A549 (cell line): ENCODE measurements at regions of chr1 and their contacts with region 1.

Region 1: GRCh38 chr1:32321712-32322291 is 14.2 kb downstream of the MARCKSL1 start:
- DNase-seq: peak; percentile 42 to 88
- ATAC-seq: peak; percentile 97 to 98
- H3K4me3 ChIP-seq: 0 out of 3 replicates have a peak overlapping the region, but pooled peaks have one; percentile 9
- H3K27ac ChIP-seq: peak overlapping the region; percentile 87 to 90
- H3K4me1 ChIP-seq: peaks cover 31% of the 10 kb centered on the region
- CTCF ChIP-seq: no peak
- EP300 ChIP-seq: no peak; a peak in 1 of 5 replicates
- POLR2A ChIP-seq: no peak
- RAD21 ChIP-seq: no peak

Region 2: DNA sequence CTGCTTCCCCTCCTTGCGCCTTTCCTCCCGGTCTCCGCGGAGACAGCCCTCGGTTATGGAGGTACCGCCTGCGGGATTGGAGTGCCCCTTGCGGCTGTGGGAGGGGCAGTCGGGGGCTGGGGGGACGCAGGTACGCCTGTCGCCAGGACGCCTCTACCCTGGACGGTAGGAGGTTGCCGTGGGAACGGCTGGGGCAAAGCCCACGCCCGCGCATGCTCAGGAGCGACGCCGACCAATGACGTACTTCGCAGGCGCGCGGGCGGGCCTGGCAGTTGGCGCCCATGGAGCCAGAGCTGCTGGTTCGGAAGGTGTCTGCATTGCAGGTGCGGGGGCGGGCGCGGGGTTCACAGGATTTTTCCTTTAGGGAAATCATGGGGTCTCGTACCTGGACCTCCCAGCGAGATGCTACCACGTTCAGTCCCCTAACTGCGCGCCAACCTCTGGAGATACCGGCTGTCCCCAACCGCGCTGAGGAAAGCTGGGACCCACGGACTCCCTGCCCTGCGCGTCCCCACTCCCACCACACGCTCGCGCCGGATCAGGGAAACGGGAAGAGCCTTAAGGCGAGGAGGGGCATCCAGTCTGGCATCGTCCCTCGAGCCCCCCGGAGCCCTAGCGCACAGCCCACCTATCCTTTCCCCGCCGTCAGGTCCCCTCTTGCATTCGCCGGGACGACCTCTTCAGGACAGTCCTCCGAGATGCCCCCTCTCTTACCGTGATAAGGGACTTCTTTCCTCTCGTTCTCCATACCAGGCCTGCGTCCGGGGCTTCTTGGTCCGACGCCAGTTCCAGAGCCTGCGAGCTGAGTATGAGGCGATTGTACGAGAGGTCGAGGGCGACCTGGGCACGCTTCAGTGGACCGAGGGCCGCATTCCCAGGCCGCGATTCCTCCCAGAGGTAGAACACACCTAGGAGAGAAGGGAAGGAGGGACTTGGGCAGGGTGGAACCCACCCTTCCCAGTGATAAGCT is 116.1 kb before region 1 on chr1 and contains the start of gene IQCC:
- CTCF ChIA-PET with region 1: interaction called, 11 read pairs
- POLR2A ChIA-PET with region 1: interaction called, 4 read pairs
- DNase-seq: peak; percentile 70 to 81
- ATAC-seq: peak; percentile 75 to 84
- H3K4me3 ChIP-seq: peak within 1 kb of the TSS; percentile 83
- H3K27ac ChIP-seq: peak within 1 kb of the TSS; percentile 85 to 92
- H3K4me1 ChIP-seq: peaks cover 12% of the 10 kb centered on the region; the same call in 2 of the 3 replicates
- CTCF ChIP-seq: no peak
- EP300 ChIP-seq: no peak
- POLR2A ChIP-seq: peak; percentile 57
- RAD21 ChIP-seq: no peak
- polyA plus RNA-seq, gene IQCC: 1.6 and 1.8 TPM in 2 replicates

Region 3: DNA sequence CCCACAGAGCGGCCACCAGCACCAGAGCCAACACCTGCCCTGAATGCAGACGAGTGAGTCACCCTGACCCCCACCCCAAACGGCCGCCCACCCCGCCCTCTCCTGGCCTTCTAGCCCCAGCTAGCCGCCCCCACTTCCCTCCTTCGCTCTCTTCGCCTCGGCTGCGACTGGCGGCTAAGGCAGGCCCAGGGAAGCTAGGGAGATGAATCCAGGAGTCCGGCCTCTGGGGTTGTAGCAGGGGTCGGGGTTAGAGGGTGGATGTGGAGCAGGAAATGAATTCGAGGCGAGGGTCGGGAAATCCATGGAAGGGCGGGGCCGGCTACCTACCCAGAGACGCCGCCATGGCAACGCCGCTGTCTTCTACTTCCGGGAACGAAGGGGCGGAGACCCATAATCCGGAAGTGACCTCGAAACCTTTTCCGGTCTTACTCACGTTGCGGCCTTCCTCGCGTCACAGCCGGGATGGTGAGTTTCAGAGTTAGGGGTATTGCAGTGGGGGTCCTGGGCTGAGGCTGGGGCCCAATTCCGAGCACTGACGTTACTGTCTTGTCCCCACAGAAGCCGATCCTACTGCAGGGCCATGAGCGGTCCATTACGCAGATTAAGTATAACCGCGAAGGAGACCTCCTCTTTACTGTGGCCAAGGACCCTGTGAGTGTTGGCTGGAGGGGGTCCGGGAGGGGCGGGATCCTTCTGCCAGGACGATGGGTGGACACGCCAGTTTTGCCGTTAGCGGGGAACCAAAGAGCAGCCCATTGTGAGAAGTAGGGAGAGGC is 99.6 kb before region 1 on chr1 and contains the starts of genes EIF3I and TMEM234:
- CTCF ChIA-PET with region 1: interaction called, 30 read pairs
- POLR2A ChIA-PET with region 1: no interaction called
- DNase-seq: peak; percentile 84 to 89
- ATAC-seq: peak; percentile 97
- H3K4me3 ChIP-seq: peak within 1 kb of the TSS; percentile 86
- H3K27ac ChIP-seq: peak within 1 kb of the TSS; percentile 93 to 97
- H3K4me1 ChIP-seq: peaks cover 18% of the 10 kb centered on the region
- CTCF ChIP-seq: no peak
- EP300 ChIP-seq: no peak
- POLR2A ChIP-seq: peak; percentile 53
- RAD21 ChIP-seq: no peak
- polyA plus RNA-seq, gene EIF3I: 299 and 300 TPM in 2 replicates
- polyA plus RNA-seq, gene TMEM234: 8.4 and 10.9 TPM in 2 replicates

Region 4: DNA sequence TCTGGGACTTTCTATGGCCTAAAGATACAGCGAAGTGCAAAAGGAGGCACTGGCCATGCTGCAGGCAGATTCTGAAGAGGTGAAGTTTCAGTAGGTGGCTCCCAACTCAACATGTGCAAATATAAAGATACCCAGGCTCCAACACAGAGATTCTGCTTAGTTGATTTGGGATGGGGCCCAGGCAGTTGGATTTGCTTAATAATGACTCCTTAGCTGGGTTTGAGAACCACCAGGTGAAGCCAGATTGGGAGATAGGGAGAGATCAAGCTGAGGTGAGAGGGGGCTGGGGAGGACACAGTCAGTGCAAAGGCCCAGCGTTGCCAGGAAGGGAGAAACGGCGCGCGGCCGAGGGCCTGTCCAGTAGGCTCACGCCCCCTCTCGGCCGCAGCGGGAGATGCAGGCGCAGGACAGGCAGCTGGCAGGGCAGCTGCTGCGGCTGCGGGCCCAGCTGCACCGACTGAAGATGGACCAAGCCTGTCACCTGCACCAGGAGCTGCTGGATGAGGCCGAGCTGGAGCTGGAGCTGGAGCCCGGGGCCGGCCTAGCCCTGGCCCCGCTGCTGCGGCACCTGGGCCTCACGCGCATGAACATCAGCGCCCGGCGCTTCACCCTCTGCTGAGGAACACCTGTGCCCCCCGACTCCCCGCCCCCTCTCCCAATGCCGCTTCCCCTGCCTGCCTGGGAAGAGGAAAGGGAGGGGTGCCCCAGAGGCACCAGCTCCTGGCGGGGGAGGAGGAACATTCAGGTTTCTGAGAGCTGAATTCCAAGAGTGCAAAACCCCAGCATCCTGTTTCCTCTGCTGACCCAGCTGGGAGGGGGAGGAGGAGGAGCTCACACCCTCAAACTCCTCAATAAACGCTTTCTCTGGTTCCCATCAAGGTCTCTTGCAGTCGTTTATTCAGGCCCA is 73.6 kb before region 1 on chr1:
- CTCF ChIA-PET with region 1: interaction called, 28 read pairs
- POLR2A ChIA-PET with region 1: no interaction called
- DNase-seq: peak; percentile 72 to 74
- ATAC-seq: peak; percentile 90 to 95
- H3K4me3 ChIP-seq: no peak overlapping the region
- H3K27ac ChIP-seq: peak overlapping the region in 1 of 2 experiments; percentile 57; a peak in 2 of 6 replicates
- H3K4me1 ChIP-seq: peaks cover 3% of the 10 kb centered on the region; the same call in 1 of the 3 replicates
- CTCF ChIP-seq: peak; percentile 66
- EP300 ChIP-seq: no peak
- POLR2A ChIP-seq: no peak
- RAD21 ChIP-seq: peak; percentile 47 to 56

Region 5: DNA sequence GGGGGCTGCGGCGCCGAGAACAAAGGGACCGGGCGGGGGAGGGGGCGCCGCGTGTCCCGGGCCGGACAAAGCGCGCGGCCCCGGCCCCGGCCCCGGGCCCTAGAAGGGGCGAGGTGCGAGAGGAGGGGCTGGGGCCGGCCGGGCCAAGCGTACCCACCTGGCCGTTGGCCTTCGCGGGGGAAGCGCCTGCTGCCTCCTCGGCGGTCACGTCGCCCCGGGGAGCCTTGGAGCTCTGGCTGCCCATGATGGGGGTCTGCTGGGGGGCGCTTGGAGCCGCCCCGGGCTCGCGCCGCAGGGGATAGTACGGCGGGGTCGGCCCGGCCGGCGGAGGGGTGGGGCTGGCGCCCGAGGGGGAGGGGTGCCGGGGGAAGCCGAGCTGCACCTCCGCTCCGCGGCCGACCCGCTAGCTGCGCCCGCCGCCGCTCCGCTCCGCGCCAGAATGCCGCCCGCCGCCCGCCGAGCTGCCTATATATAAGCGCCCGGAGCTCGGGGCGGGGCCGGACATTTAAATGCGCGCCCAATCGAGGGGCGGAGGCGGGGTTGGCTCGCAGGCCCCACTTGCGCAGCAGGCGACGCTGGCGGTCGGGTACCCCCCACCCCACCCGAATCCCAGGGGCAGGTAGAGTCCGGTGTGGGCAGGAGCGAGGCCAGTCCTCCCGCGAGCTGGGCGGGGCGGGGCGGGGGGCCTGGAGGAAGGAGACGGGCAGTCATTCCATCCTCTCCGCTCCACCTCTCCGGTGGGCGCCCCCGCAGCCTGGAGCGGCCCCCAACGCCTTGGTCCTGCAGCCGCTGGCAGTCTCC is 14.2 kb after region 1 on chr1 and contains the start of gene MARCKSL1:
- CTCF ChIA-PET with region 1: interaction called, 5 read pairs
- POLR2A ChIA-PET with region 1: interaction called, 20 read pairs
- DNase-seq: peak; percentile 43 to 54
- ATAC-seq: peak; percentile 62 to 73
- H3K4me3 ChIP-seq: peak within 1 kb of the TSS; percentile 100
- H3K27ac ChIP-seq: peak within 1 kb of the TSS; percentile 96 to 98
- H3K4me1 ChIP-seq: peaks cover 33% of the 10 kb centered on the region
- CTCF ChIP-seq: no peak
- EP300 ChIP-seq: no peak
- POLR2A ChIP-seq: peak; percentile 90
- RAD21 ChIP-seq: no peak
- polyA plus RNA-seq, gene MARCKSL1: 73.2 and 89.4 TPM in 2 replicates